ENCODE measurements at regions of chr3 and their contacts with region 1.

Region 1: GRCh38 chr3:114005481-114005880 is 50.8 kb downstream of the CCDC191 start:
- DNase-seq: no peak
- ATAC-seq: no peak
- H3K4me3 ChIP-seq: no peak overlapping the region
- H3K27ac ChIP-seq: no peak overlapping the region
- H3K4me1 ChIP-seq: no peaks in the 10 kb centered on the region
- H3K27me3 ChIP-seq: no peaks in the 10 kb centered on the region
- CTCF ChIP-seq: no peak

Region 2: GRCh38 chr3:112958811-112959560 is 1046.5 kb before region 1 on chr3:
- intact Hi-C with region 1: loop called in 1 of 10 experiments (anchors 10 kb)
- DNase-seq: no peak
- ATAC-seq: no peak
- H3K4me3 ChIP-seq: peak overlapping the region in 1 of 10 donors; percentile 24
- H3K27ac ChIP-seq: peak overlapping the region in 1 of 10 donors; percentile 34
- H3K4me1 ChIP-seq: peaks cover 0 to 14% (median 0%) of the 10 kb centered on the region in 9 donors
- H3K27me3 ChIP-seq: peaks cover 0 to 11% (median 0%) of the 10 kb centered on the region in 7 donors
- CTCF ChIP-seq: no peak

Region 3: DNA sequence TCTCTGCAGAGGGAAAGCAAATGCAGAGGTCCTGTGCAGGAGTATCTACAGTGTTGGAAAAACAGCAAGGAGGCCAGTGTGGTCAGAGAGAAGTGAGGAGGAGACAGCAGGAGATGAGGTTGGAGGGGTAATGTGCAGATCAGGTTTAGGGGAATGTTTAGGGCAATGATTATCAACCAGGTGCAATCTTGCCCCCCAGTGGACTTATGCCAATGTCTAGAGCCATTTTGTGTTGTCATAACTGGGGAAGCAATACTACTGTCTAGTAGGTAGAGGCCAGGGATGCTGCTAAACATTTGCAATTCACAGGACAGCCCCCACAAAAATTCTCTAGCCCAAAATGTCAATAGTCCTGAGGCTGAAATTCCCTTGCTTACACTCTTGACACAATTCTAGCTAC is 37.7 kb after region 1 on chr3:
- intact Hi-C with region 1: no loop called
- DNase-seq: no peak
- ATAC-seq: no peak
- H3K4me3 ChIP-seq: no peak overlapping the region
- H3K27ac ChIP-seq: no peak overlapping the region
- H3K4me1 ChIP-seq: no peaks in the 10 kb centered on the region
- H3K27me3 ChIP-seq: no peaks in the 10 kb centered on the region
- CTCF ChIP-seq: no peak